AG04450 (cell line): ENCODE measurements at regions of chr12 and their contacts with region 1.

Region 1: DNA sequence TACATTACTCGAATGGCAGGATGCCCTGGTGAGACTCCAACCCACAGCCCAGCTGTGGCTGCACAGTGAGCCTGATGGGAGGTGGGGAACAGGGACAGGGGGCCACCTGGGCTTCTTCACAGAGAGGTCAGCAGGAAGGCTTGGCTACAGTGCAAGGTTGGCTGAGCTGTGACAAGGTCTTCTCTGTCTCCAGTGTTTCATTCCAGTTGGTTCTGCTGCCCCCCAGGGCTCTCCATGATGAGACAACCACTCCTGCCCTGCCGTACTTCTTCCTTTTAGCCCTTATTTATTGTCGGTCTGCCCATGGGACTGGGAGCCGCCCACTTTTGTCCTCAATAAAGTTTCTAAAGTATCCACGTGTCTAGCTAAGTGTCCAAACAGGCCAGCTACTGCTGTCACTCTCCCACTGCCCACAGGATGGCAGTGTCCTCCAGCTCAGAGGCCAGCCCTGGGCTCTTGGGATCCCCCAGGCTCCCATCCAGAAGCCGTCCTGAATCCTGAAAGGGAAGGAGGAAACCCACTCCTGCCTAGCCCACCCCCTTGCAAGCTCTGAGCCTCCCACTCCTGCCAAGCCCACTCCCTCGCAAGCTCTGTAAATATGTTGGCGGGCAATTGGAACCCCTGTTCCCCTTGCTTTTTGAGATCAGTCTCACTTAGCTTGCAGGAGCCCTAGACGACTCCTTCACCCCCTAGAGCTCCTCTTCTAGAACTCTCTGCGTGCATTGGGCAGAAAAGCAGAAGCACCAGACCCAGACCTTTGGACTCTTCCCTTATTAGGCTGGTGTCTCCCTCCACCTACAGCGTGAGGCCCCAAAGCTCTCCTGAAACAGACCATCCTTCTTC is 5.4 kb downstream of the C1QL4 start:
- DNase-seq: peak; percentile 44
- H3K4me3 ChIP-seq: no peak overlapping the region
- H3K27ac ChIP-seq: no peak overlapping the region
- H3K27me3 ChIP-seq: peaks cover 32% of the 10 kb centered on the region
- CTCF ChIP-seq: peak; percentile 92

Region 2: DNA sequence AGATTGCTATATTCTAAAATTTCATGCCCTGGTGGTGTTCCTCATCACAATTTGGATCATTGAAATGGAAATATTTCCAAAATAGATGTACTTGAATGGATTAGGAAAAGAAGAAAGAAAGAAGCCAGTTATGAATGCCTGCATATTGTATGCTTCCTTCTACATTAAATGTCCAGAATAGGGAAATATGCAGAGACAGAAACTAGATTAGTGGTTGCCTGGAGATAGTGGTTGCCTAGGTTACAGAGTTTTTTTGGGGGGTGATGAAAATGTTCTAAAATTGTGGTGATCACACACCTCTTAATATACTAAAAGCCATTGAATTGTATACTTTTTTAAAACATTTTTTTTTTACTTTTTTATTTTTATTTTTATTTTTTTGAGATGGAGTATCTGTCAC is 160.7 kb before region 1 on chr12:
- CTCF ChIA-PET with region 1: no interaction called
- POLR2A ChIA-PET with region 1: no interaction called
- DNase-seq: no peak
- H3K4me3 ChIP-seq: no peak overlapping the region
- H3K27ac ChIP-seq: no peak overlapping the region
- H3K27me3 ChIP-seq: no peaks in the 10 kb centered on the region
- CTCF ChIP-seq: no peak

Region 3: DNA sequence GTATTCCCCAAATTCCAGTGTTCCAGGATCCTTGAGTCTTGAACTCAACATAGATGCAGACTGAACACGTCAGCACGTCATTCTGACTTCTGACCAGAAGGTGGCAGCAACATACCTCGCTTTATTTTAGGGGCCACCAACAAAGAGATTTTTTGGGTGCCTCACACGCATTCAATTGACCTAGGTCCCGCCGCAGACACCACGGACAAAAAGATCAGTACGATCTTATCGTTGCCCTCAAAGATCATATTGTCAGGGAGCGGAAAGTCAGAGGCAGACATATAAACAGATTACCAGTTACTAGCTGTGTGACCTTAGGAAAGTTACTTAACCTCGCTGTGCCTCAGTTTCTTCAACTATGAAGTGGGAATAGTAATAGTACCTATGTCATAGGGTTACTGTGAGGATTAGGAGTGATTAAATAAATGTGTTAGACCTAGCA is 43.2 kb before region 1 on chr12:
- CTCF ChIA-PET with region 1: interaction called, 11 read pairs
- POLR2A ChIA-PET with region 1: no interaction called
- DNase-seq: no peak
- H3K4me3 ChIP-seq: no peak overlapping the region
- H3K27ac ChIP-seq: no peak overlapping the region
- H3K27me3 ChIP-seq: peaks cover 16% of the 10 kb centered on the region
- CTCF ChIP-seq: peak; percentile 79

Region 4: GRCh38 chr12:49309391-49309790 is 22.2 kb before region 1 on chr12:
- CTCF ChIA-PET with region 1: interaction called, 15 read pairs
- POLR2A ChIA-PET with region 1: no interaction called
- DNase-seq: no peak
- H3K4me3 ChIP-seq: no peak overlapping the region
- H3K27ac ChIP-seq: no peak overlapping the region
- H3K27me3 ChIP-seq: peaks cover 21% of the 10 kb centered on the region
- CTCF ChIP-seq: no peak

Region 5: GRCh38 chr12:49342066-49342913 is 10.7 kb after region 1 on chr12:
- CTCF ChIA-PET with region 1: interaction called, 52 read pairs
- POLR2A ChIA-PET with region 1: interaction called, 7 read pairs
- DNase-seq: peak; percentile 30
- H3K4me3 ChIP-seq: peak overlapping the region; percentile 49
- H3K27ac ChIP-seq: no peak overlapping the region
- H3K27me3 ChIP-seq: peaks cover 85% of the 10 kb centered on the region
- CTCF ChIP-seq: peak; percentile 70

Region 6: DNA sequence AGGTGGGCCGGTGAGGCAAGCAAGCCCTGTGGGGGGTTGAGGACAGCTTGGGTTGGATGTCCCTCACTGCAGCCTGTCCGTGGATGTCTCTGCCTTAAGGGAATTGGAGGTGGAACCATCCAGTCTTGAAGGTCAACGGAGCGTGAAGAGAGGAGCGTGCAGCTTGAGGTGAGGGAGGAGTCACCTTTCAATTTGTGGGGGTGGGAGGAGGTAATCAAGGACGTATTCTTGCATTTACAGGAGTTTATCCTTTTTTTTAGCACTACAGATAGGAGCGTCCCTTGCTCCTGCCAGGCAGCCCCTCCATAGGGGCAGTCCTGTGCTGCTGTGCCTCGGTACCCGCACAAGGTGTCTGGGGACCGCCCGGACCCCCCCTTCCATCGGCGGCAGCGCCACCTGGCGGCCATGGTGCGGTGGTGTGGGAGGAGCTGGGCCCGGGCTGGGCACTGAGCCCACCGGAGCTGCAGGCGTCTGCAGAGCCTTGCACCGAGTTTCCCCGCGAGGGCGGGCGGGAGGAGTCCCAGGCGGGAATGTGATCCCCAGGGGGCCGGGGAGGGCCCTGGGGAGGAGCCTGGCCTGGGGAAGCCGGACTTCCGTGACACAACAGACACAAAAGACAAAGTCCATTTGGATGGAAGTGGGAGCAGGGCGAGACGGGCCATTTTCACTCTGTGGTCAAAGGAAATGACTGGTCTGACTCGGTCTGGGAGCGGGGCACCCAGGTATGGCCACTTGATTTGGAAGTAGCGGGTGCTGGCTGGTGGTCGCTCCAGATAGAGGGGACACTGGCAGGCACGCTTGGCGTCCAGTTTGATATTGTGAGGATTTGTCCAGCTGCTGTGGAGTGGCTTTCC is 16.0 kb after region 1 on chr12:
- CTCF ChIA-PET with region 1: interaction called, 52 read pairs
- POLR2A ChIA-PET with region 1: interaction called, 7 read pairs
- DNase-seq: peak; percentile 77
- H3K4me3 ChIP-seq: peak overlapping the region; percentile 66
- H3K27ac ChIP-seq: peak overlapping the region; percentile 39
- H3K27me3 ChIP-seq: peaks cover 44% of the 10 kb centered on the region
- CTCF ChIP-seq: peak; percentile 87

Region 7: GRCh38 chr12:49553512-49554088 is 222.0 kb after region 1 on chr12:
- CTCF ChIA-PET with region 1: interaction called, 11 read pairs
- POLR2A ChIA-PET with region 1: no interaction called
- DNase-seq: no peak
- H3K4me3 ChIP-seq: no peak overlapping the region
- H3K27ac ChIP-seq: no peak overlapping the region
- H3K27me3 ChIP-seq: peaks cover 23% of the 10 kb centered on the region
- CTCF ChIP-seq: peak; percentile 38

Region 8: DNA sequence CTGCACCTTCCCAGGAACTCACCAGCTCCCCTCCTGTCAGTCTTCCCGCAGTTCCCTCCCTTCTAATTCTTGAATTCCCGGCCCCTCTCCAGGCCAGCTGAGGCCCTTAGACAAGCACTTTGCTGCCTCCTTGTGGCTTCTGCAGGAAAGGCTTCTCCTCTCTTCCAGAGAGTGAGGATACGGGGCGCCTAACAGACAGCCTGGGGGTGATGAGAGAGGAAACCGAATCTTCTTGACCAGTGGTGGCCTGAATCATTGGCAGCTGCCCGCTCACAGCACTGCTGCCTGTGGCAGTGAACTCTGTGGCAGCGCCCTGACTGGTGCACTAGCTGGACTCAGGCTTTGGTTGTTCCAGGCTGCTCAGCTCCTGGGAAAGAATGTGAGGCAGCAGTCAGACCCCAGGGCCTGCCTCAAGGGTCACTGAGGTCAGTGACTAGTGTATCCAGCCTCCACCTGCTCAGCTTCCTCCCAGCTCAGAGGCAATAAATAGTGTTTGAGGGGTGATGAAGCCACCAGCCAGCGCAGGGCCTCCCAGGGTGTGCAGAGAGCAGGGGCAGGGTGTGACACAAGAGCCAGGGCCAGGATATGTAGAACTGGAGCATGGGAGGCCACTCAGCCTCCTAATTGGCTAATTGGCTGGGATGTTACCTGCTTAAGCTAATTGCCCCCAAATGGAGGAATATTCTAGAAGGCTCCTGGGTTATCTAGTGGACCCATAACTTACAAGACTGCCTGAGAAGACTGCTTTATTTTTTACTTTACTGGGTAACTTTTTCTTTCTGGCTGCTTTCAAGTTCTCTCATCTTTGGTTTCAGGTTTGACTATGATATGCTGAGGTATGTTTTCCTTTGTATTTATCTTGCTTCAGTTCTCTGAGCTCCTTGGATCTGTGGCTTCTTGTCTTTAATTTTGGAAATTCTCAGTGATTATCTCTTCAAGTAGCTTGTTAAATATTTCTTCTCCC is 249.3 kb after region 1 on chr12:
- CTCF ChIA-PET with region 1: interaction called, 70 read pairs
- POLR2A ChIA-PET with region 1: no interaction called
- DNase-seq: peak; percentile 42
- H3K4me3 ChIP-seq: no peak overlapping the region
- H3K27ac ChIP-seq: no peak overlapping the region
- H3K27me3 ChIP-seq: no peaks in the 10 kb centered on the region
- CTCF ChIP-seq: peak; percentile 93